ENCODE measurements at regions of chr2 and their contacts with region 1.

Region 1: GRCh38 chr2:66495788-66496640 is 61.1 kb downstream of the MEIS1 start:
- DNase-seq: peak; percentile 21 to 89
- H3K4me3 ChIP-seq: peak overlapping the region; percentile 18 to 23
- H3K27ac ChIP-seq: peak overlapping the region; percentile 68 to 70
- H3K4me1 ChIP-seq: peaks cover 11 to 34% of the 10 kb centered on the region in 2 donors
- H3K27me3 ChIP-seq: no peaks in the 10 kb centered on the region
- CTCF ChIP-seq: peak; percentile 26 to 40 (median 27)

Region 2: GRCh38 chr2:66455490-66455889 is 40.5 kb before region 1 on chr2:
- intact Hi-C with region 1: no loop called
- DNase-seq: no peak
- H3K4me3 ChIP-seq: no peak overlapping the region
- H3K27ac ChIP-seq: no peak overlapping the region
- H3K4me1 ChIP-seq: peaks cover 0 to 14% of the 10 kb centered on the region in 2 donors
- H3K27me3 ChIP-seq: no peaks in the 10 kb centered on the region
- CTCF ChIP-seq: no peak

Region 3: GRCh38 chr2:66555501-66556324 is 59.7 kb after region 1 on chr2:
- intact Hi-C with region 1: loop called (anchors 2 kb)
- DNase-seq: no peak
- H3K4me3 ChIP-seq: peak overlapping the region; percentile 23 to 59
- H3K27ac ChIP-seq: peak overlapping the region; percentile 74 to 82
- H3K4me1 ChIP-seq: peaks cover 2 to 19% of the 10 kb centered on the region in 2 donors
- H3K27me3 ChIP-seq: no peaks in the 10 kb centered on the region
- CTCF ChIP-seq: no peak